ENCODE measurements at regions of chr15 and their contacts with region 1.

Region 1: GRCh38 chr15:90869601-90870353 is 1.4 kb downstream of the FURIN start:
- DNase-seq: peak; percentile 55 to 75 (median 61)
- ATAC-seq: peak; percentile 50
- H3K4me3 ChIP-seq: no peak overlapping the region
- H3K4me1 ChIP-seq: peaks cover 36% of the 10 kb centered on the region
- CTCF ChIP-seq: no peak

Region 2: GRCh38 chr15:90610190-90610589 is 259.6 kb before region 1 on chr15:
- intact Hi-C with region 1: no loop called
- DNase-seq: no peak
- ATAC-seq: peak; percentile 25
- H3K4me3 ChIP-seq: no peak overlapping the region
- H3K4me1 ChIP-seq: peaks cover 5% of the 10 kb centered on the region
- CTCF ChIP-seq: no peak

Region 3: DNA sequence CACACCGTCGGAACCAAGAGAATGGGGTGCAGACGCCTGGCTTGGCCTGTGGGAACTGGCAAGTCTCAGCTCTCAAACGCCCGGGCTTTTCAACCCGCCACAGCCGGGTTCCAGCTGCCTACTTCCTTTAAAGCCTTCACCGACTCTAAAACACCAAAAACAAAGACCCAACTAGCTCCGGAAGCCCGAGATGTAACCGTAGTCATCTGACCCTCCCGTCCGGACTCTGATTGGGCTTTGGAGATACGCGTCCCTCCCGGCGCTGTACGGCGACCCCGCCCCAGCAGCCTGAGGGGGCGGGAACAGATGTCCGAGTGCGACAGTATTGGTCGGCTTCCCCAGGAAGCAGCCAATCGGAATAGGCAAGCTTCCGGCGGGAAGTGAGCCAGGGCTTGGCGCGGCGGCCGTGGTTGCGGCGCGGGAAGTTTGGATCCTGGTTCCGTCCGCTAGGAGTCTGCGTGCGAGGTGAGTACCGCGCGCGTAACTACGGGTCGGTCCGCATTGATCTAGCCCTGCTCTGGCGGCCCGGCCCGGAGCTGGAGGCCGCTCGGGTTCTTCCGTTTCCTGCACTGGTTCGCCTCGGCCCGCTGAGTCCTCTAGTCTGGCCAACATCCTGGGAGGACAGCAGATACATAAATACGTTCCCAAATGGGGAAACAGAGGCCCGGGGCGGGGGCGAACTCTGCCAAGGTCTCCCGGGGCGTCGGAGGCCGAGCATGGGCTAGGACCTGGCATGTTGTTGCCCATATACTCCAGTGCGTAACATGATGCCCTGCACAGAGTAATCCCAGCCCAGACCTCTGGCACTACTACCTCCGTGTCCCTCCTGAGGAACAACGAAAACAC is 152.6 kb before region 1 on chr15 and contains the start of gene BLM:
- intact Hi-C with region 1: loop called in 1 of 2 experiments (anchors 10 kb)
- DNase-seq: peak; percentile 96 to 97 (median 96)
- ATAC-seq: peak; percentile 100
- H3K4me3 ChIP-seq: peak within 1 kb of the TSS; percentile 46
- H3K4me1 ChIP-seq: peaks cover 12% of the 10 kb centered on the region
- CTCF ChIP-seq: peak; percentile 14
- total RNA-seq, gene BLM: 2.9 to 7.2 (median 4.1) TPM

Measured in mucosa of descending colon (tissue), 3 donors.